ENCODE measurements at regions of chr4 and their contacts with region 1.

Region 1: DNA sequence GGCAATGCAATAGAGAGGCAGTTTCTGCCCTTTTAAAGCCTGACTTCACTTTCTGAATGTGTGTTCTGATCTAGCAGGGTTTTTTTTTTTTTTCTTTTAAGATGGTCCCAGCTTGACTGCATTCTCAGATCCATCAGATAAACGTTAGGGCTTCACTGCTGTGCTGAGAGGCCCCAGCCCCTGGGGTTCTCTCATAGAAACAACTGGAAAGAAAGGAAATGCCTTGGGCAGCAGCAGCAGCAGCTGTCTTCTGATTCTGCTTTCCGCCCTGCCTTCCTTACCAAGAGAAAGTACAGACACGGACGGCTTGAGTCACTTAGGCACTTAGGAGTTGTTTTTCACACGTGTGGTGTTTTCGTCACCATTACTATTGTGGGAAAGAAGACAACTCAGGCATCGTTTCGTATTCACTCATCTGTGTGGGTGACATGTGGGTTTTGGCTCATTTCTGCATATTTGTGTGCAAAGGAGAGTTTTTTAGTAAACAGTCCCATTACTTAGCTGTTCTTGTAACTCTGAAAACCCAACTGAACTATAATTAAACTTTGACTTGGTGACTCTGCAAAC is 172.0 kb downstream of the PTTG2 start:
- DNase-seq: peak; percentile 30 to 83
- H3K4me3 ChIP-seq: no peak overlapping the region
- H3K27ac ChIP-seq: peak overlapping the region; percentile 65 to 80
- H3K4me1 ChIP-seq: peaks cover 0 to 15% of the 10 kb centered on the region in 2 donors
- H3K27me3 ChIP-seq: no peaks in the 10 kb centered on the region
- CTCF ChIP-seq: no peak

Region 2: DNA sequence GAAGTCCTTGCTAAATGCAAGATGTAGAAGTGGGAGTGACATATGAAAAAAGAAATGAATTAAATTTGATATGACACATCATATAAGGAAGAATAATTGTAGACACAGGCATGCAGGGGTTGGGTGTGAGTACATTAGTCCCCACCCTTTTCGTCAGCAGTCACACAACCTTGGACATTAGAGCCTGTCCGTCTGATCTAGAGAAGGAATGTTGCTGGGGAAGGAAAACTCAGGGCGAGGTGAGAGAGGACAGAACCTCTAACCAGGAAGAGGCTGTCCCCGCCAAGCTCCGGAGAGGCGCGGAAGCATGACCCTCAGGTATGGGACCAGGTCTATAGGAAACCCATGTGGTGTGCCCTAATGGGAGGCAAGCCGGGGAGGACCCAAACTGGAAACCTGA is 548.1 kb before region 1 on chr4:
- intact Hi-C with region 1: no loop called
- DNase-seq: no peak
- H3K4me3 ChIP-seq: no peak overlapping the region
- H3K27ac ChIP-seq: no peak overlapping the region
- H3K4me1 ChIP-seq: no peaks in the 10 kb centered on the region
- H3K27me3 ChIP-seq: no peaks in the 10 kb centered on the region
- CTCF ChIP-seq: no peak

Region 3: GRCh38 chr4:38071801-38072431 is 60.3 kb before region 1 on chr4:
- intact Hi-C with region 1: loop called (anchors 5 kb)
- DNase-seq: no peak
- H3K4me3 ChIP-seq: no peak overlapping the region
- H3K27ac ChIP-seq: peak overlapping the region in 1 of 2 donors; percentile 25
- H3K4me1 ChIP-seq: peaks cover 0 to 6% of the 10 kb centered on the region in 2 donors
- H3K27me3 ChIP-seq: no peaks in the 10 kb centered on the region
- CTCF ChIP-seq: no peak

Region 4: GRCh38 chr4:38099908-38100407 is 32.2 kb before region 1 on chr4:
- intact Hi-C with region 1: loop called (anchors 5 kb)
- DNase-seq: no peak
- H3K4me3 ChIP-seq: no peak overlapping the region
- H3K27ac ChIP-seq: peak overlapping the region; percentile 36 to 42
- H3K4me1 ChIP-seq: peaks cover 3 to 14% of the 10 kb centered on the region in 2 donors
- H3K27me3 ChIP-seq: no peaks in the 10 kb centered on the region
- CTCF ChIP-seq: no peak

Region 5: DNA sequence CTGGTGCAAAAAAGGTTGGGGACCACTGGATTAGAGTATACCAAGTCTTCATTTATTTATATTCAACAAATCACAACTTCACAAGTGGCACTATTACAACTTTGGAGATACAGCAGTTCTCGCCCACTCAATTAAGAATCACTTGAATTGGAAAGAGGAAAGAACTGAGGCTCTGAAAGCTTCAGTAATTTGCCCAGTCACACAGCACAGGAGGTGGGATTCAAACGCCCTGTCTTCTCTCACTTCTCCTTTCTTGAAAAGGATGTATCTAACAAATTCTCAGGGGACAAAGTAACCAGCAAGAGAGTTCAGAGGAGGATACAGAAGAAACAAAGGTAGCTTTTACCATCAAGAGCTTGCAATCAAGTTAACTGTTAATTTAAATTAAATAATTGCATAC is 1494.1 kb after region 1 on chr4:
- intact Hi-C with region 1: no loop called
- DNase-seq: no peak
- H3K4me3 ChIP-seq: no peak overlapping the region
- H3K27ac ChIP-seq: no peak overlapping the region
- H3K4me1 ChIP-seq: peaks cover 0 to 12% of the 10 kb centered on the region in 2 donors
- H3K27me3 ChIP-seq: no peaks in the 10 kb centered on the region
- CTCF ChIP-seq: no peak